Left ventricle myocardium superior (tissue), 1 donor: ENCODE measurements at regions of chr2 and their contacts with region 1.

Region 1: GRCh38 chr2:206981739-206982340 is 42.5 kb downstream of the CPO start:
- DNase-seq: peak; percentile 79
- ATAC-seq: peak; percentile 94

Region 2: DNA sequence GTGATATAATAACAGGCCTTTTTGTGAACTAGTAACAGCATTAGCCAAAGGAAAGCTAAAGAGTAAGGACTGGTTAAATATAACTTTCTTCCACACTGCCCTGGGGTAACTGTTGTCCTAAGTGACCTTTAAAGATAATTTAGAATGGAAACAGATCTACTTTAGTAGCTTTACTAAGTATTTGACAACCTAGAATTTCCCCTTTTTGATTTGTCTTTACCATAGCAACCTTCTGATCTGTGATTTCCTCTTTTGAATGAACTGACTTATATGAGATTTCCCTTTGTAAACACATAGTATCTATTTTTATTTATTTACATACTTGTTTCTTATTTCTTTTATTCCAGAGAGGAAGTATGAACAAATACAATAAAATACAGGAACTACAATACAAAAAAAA is 194.4 kb after region 1 on chr2:
- intact Hi-C with region 1: loop called (anchors 10 kb)
- DNase-seq: no peak
- ATAC-seq: no peak